BJ (cell line): ENCODE measurements at regions of chr13 and their contacts with region 1.

Region 1: DNA sequence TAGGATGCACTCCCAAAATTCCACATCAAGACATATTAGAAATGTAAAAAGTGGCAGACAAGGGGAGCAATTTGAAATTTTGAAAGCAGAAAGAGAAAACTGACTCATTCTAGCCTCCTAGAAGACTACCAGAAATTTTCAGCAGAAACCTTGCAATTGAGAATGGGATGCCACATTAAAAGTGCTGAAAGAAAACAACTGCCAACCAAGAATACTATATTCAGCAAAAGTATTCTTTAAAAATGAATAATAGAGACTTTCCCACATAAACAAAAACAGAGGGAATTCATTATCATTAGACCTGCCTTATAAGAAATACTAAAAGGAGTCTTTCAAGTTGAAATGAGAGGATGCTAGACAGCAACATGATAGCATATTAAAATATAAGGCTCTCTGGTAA is 78.3 kb upstream of the HTR2A start:
- DNase-seq: no peak
- H3K4me3 ChIP-seq: no peak overlapping the region
- H3K27me3 ChIP-seq: no peaks in the 10 kb centered on the region
- CTCF ChIP-seq: no peak

Region 2: DNA sequence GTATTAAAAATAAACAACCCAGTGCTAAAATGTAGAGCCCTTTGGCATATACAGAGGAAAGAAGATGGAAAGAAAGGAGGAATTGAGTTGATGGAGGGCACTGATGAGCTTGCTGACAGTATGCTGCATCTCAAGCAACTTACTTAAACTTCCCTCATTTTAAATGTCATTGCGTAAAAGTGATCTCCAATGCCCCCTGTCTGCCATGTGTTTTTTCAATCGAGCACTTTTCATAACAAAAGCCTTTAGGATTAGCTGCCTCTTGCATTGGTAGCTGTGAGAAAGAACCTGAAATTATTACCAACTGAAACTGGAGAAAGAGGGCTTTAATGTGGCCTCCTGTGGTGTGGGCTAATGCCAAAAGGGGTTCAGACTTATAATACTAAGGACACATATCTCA is 484.3 kb after region 1 on chr13:
- CTCF ChIA-PET with region 1: interaction called, 11 read pairs
- POLR2A ChIA-PET with region 1: no interaction called
- DNase-seq: no peak
- H3K4me3 ChIP-seq: no peak overlapping the region
- H3K27me3 ChIP-seq: no peaks in the 10 kb centered on the region
- CTCF ChIP-seq: peak; percentile 48

Region 3: GRCh38 chr13:47945737-47946136 is 970.6 kb after region 1 on chr13:
- CTCF ChIA-PET with region 1: no interaction called
- POLR2A ChIA-PET with region 1: no interaction called
- DNase-seq: no peak
- H3K4me3 ChIP-seq: no peak overlapping the region
- H3K27me3 ChIP-seq: no peaks in the 10 kb centered on the region
- CTCF ChIP-seq: no peak